ENCODE measurements at regions of chr3 and their contacts with region 1.

Region 1: GRCh38 chr3:79521238-79521848 is 246.5 kb downstream of the ROBO1 start:
- DNase-seq: no peak
- ATAC-seq: no peak
- H3K4me3 Mint-ChIP-seq: no peak overlapping the region
- H3K27ac Mint-ChIP-seq: no peak overlapping the region
- H3K4me1 Mint-ChIP-seq: no peaks in the 10 kb centered on the region
- H3K27me3 Mint-ChIP-seq: no peaks in the 10 kb centered on the region
- CTCF ChIP-seq: no peak

Region 2: DNA sequence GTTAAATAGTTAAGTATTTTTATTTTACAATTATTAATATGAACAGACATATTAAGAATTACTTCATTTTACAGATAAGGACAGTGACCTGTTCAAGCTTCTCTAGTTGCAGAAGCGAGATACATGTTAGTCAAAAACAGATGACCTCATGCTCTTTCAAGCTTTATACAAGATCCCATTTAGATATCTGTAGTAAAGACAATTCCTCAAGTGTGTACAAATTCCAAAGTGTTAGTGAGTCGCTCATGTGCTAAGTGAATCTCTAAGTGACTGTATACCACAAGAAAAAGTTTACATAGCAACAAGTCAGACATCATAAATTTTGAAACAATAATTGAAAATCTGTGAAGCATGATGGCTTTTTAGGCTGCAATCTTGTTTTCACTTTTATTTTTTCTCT is 47.4 kb before region 1 on chr3:
- CTCF ChIA-PET with region 1: no interaction called
- POLR2A ChIA-PET with region 1: no interaction called
- intact Hi-C with region 1: loop called (anchors 1 kb)
- DNase-seq: no peak
- ATAC-seq: no peak
- H3K4me3 Mint-ChIP-seq: no peak overlapping the region
- H3K27ac Mint-ChIP-seq: no peak overlapping the region
- H3K4me1 Mint-ChIP-seq: no peaks in the 10 kb centered on the region
- H3K27me3 Mint-ChIP-seq: no peaks in the 10 kb centered on the region
- CTCF ChIP-seq: no peak

Region 3: GRCh38 chr3:79618883-79619282 is 97.5 kb after region 1 on chr3:
- CTCF ChIA-PET with region 1: no interaction called
- POLR2A ChIA-PET with region 1: no interaction called
- intact Hi-C with region 1: no loop called
- DNase-seq: no peak
- ATAC-seq: no peak
- H3K4me3 Mint-ChIP-seq: no peak overlapping the region
- H3K27ac Mint-ChIP-seq: no peak overlapping the region
- H3K4me1 Mint-ChIP-seq: no peaks in the 10 kb centered on the region
- H3K27me3 Mint-ChIP-seq: no peaks in the 10 kb centered on the region
- CTCF ChIP-seq: no peak

Region 4: GRCh38 chr3:79672075-79672474 is 150.7 kb after region 1 on chr3:
- CTCF ChIA-PET with region 1: no interaction called
- POLR2A ChIA-PET with region 1: no interaction called
- intact Hi-C with region 1: no loop called
- DNase-seq: no peak
- ATAC-seq: no peak
- H3K4me3 Mint-ChIP-seq: no peak overlapping the region
- H3K27ac Mint-ChIP-seq: no peak overlapping the region
- H3K4me1 Mint-ChIP-seq: no peaks in the 10 kb centered on the region
- H3K27me3 Mint-ChIP-seq: no peaks in the 10 kb centered on the region
- CTCF ChIP-seq: no peak

Region 5: GRCh38 chr3:81242871-81243270 is 1721.5 kb after region 1 on chr3:
- CTCF ChIA-PET with region 1: no interaction called
- POLR2A ChIA-PET with region 1: no interaction called
- intact Hi-C with region 1: loop called (anchors 5 kb)
- DNase-seq: no peak
- ATAC-seq: no peak
- H3K4me3 Mint-ChIP-seq: no peak overlapping the region
- H3K27ac Mint-ChIP-seq: no peak overlapping the region
- H3K4me1 Mint-ChIP-seq: no peaks in the 10 kb centered on the region
- H3K27me3 Mint-ChIP-seq: no peaks in the 10 kb centered on the region
- CTCF ChIP-seq: no peak